HepG2 (cell line): ENCODE measurements at regions of chr2 and their contacts with region 1.

Region 1: GRCh38 chr2:234690569-234691213 is 193.8 kb upstream of the ARL4C start:
- DNase-seq: peak; percentile 42
- ATAC-seq: no peak
- H3K4me3 ChIP-seq: no peak overlapping the region
- H3K27ac ChIP-seq: peak overlapping the region; percentile 79
- H3K4me1 ChIP-seq: peaks cover 98% of the 10 kb centered on the region
- H3K27me3 ChIP-seq: no peaks in the 10 kb centered on the region
- CTCF ChIP-seq: 0 out of 2 replicates have a peak, but pooled peaks have one; percentile 3
- EP300 ChIP-seq: no peak
- POLR2A ChIP-seq: no peak
- RAD21 ChIP-seq: peak; percentile 10; the same call in 1 of the 2 replicates

Region 2: DNA sequence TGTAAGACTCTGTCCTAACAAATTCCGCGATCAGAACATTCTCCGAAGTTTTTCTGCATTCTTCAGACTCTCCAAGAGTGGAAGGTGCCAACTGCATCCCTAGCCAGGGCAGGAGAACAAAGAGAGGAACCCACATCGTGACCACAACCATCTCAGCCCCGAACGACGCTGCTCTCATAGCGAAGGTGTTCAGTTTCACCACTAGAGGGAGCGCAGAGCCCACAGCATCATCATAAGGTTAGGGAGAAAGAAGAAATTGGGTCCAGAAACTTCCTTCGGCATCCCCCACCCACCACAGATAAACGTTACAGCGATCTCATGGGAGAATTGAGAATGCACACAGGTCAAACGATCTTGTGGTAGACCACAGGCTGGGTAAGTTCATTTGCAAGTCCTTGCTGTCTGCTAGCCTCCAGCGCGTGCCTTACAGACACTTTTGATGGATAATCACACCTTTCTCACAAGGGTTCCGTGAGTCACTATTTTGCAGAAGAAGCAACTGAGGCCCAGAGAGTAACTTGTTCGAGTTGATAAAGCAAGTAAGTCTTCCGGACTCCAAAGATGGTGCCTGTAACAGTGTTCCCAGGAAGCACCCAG is 140.1 kb before region 1 on chr2:
- CTCF ChIA-PET with region 1: no interaction called
- POLR2A ChIA-PET with region 1: interaction called, 4 read pairs
- in situ Hi-C with region 1: no loop called
- intact Hi-C with region 1: loop called (anchors 5 kb)
- DNase-seq: peak; percentile 73
- ATAC-seq: peak; percentile 88
- H3K4me3 ChIP-seq: no peak overlapping the region
- H3K27ac ChIP-seq: no peak overlapping the region
- H3K4me1 ChIP-seq: peaks cover 33% of the 10 kb centered on the region
- H3K27me3 ChIP-seq: peaks cover 2 to 33% of the 10 kb centered on the region in 2 experiments; a peak in 4 of 5 replicates
- CTCF ChIP-seq: peak; percentile 99
- EP300 ChIP-seq: no peak
- POLR2A ChIP-seq: no peak
- RAD21 ChIP-seq: peak; percentile 97

Region 3: GRCh38 chr2:234702731-234703225 is 12.1 kb after region 1 on chr2:
- CTCF ChIA-PET with region 1: no interaction called
- POLR2A ChIA-PET with region 1: interaction called, 11 read pairs
- in situ Hi-C with region 1: no loop called
- intact Hi-C with region 1: no loop called
- DNase-seq: peak; percentile 42
- ATAC-seq: peak; percentile 61
- H3K4me3 ChIP-seq: no peak overlapping the region
- H3K27ac ChIP-seq: no peak overlapping the region
- H3K4me1 ChIP-seq: peaks cover 18% of the 10 kb centered on the region
- H3K27me3 ChIP-seq: no peaks in the 10 kb centered on the region
- CTCF ChIP-seq: no peak
- EP300 ChIP-seq: peak in 1 of 2 experiments; percentile 30; a peak in 1 of 4 replicates
- POLR2A ChIP-seq: no peak
- RAD21 ChIP-seq: no peak

Region 4: DNA sequence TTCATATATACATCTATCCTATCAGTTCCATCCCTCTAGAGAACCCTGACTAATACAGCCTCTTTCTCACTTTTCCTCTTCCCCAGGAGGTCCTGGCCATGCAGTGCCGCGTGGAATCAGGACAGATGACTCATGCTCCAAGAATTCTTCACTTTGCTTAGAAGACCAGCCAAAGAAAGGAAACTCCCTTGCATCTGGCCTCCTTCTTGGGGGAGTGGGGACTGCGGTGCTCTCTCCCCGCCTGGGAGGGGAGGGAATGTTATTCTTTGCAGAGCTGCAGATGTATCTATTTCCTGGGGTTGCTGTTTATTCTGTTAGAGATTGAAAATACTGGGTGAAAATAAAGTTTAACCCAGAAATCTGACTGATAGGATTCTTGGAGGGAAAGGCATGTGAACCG is 149.6 kb after region 1 on chr2:
- CTCF ChIA-PET with region 1: no interaction called
- POLR2A ChIA-PET with region 1: interaction called, 6 read pairs
- in situ Hi-C with region 1: no loop called
- intact Hi-C with region 1: loop called (anchors 5 kb)
- DNase-seq: peak; percentile 69
- ATAC-seq: peak; percentile 26
- H3K4me3 ChIP-seq: no peak overlapping the region
- H3K27ac ChIP-seq: no peak overlapping the region
- H3K4me1 ChIP-seq: peaks cover 95% of the 10 kb centered on the region
- H3K27me3 ChIP-seq: no peaks in the 10 kb centered on the region
- CTCF ChIP-seq: no peak
- EP300 ChIP-seq: peak in 1 of 2 experiments; percentile 24; a peak in 1 of 4 replicates
- POLR2A ChIP-seq: no peak
- RAD21 ChIP-seq: no peak

Region 5: GRCh38 chr2:234863043-234863934 is 172.6 kb after region 1 on chr2:
- CTCF ChIA-PET with region 1: no interaction called
- POLR2A ChIA-PET with region 1: interaction called, 5 read pairs
- in situ Hi-C with region 1: no loop called
- intact Hi-C with region 1: loop called (anchors 5 kb)
- DNase-seq: peak; percentile 88
- ATAC-seq: peak; percentile 79
- H3K4me3 ChIP-seq: no peak overlapping the region
- H3K27ac ChIP-seq: peak overlapping the region; percentile 88
- H3K4me1 ChIP-seq: peaks cover 96% of the 10 kb centered on the region
- H3K27me3 ChIP-seq: no peaks in the 10 kb centered on the region
- CTCF ChIP-seq: 0 out of 2 replicates have a peak, but pooled peaks have one; percentile 3
- EP300 ChIP-seq: peak in 1 of 2 experiments; percentile 53; a peak in 1 of 4 replicates
- POLR2A ChIP-seq: 0 out of 4 replicates have a peak, but pooled peaks of 1 of the 2 experiments have one; percentile 23
- RAD21 ChIP-seq: no peak; the same call in 1 of the 2 replicates

Region 6: DNA sequence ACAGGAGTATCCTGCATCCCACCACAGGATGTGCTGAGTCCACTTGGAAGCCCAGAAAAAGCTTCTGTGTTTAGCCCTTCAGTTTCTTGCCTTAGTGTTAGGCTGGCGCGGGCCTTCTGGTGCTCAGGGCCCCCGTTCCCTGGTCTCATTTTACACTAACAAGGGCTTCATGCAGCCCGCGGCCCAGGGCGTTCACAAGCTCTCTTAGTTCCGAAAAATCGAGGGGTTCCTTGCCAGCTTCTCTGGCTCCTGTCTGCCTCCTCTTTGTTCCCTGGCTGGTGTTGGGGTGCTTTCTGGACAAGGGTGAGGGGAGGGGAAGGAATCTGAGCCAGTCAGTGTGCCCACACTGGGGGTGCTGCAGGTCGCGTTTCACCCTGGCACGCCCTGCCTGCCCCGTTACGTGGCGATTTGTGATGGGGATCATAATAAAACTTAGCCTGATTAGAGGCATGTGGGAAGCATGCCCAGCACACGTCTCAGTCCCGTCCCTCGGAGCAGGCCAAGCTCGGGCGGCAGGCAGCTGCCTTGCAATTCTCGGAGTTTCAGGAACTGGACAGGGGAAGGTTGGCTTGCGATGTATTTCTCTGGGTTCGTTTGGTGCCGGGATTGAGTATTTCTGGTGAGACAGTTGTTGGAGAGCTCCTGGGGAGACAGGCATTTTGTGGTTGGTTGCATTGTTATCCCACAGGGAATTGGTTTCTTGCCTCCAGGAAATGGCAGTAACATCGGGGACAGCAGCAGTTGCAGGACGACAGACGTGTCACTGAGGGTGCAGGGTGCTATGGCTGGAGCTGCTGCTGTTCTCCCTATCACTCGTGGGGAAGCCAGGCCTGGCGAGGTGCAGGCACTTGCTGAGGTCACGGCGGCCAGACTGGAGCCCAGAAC is 284.1 kb after region 1 on chr2:
- CTCF ChIA-PET with region 1: no interaction called
- POLR2A ChIA-PET with region 1: interaction called, 11 read pairs
- in situ Hi-C with region 1: no loop called
- intact Hi-C with region 1: loop called (anchors 2 kb)
- DNase-seq: no peak
- ATAC-seq: no peak
- H3K4me3 ChIP-seq: no peak overlapping the region
- H3K27ac ChIP-seq: no peak overlapping the region
- H3K4me1 ChIP-seq: peaks cover 82% of the 10 kb centered on the region
- H3K27me3 ChIP-seq: no peaks in the 10 kb centered on the region
- CTCF ChIP-seq: no peak
- EP300 ChIP-seq: no peak
- POLR2A ChIP-seq: no peak
- RAD21 ChIP-seq: no peak

Region 7: DNA sequence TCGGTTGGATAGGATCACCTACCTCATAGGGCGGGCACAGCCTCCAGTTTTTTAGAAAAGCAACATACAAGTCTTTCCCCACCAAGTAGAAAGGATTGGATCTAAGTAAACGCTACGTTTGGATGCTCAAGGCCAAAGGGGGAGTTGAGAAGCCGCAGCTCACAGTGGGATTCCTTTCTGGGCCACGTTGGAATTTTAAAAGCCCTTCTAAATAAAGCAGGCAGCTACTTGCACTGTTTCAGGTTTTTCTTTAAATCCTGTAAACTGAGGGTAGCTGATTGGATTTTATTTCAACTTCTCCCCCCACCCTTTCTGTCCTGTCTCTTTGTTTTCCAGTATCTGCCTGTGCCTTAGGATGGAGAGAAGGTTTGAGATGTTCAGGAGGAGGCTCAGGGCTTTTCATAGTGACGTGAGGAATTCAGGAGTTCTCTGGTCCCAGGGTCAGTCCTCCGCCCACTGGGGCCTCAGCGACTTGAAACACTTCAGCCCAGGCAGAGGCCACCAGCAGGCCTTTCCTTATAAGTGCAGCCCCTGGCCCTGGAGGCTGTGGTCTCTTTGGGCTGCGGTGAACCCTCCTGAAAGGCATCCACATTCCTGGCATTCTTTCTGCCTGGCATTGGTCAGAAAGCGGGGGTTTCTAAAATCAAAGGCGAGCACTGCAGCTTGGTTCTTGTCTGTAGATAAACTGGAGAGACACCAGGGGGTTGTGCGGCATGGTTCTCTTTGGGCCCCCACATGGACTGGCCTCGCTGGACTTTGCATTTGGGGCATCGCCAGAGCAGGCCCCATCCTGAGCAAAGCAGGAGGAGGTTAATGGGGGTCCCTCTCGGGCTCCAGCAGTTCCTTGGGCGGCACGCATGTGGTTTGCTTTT is 305.6 kb after region 1 on chr2:
- CTCF ChIA-PET with region 1: no interaction called
- POLR2A ChIA-PET with region 1: interaction called, 16 read pairs
- in situ Hi-C with region 1: no loop called
- intact Hi-C with region 1: no loop called
- DNase-seq: peak; percentile 86
- ATAC-seq: peak; percentile 13
- H3K4me3 ChIP-seq: peak overlapping the region in 1 of 3 experiments; percentile 2; a peak in 1 of 6 replicates
- H3K27ac ChIP-seq: peak overlapping the region; percentile 75
- H3K4me1 ChIP-seq: peaks cover 100% of the 10 kb centered on the region
- H3K27me3 ChIP-seq: no peaks in the 10 kb centered on the region
- CTCF ChIP-seq: no peak
- EP300 ChIP-seq: peak in 1 of 2 experiments; percentile 33; a peak in 1 of 4 replicates
- POLR2A ChIP-seq: no peak
- RAD21 ChIP-seq: peak; percentile 19; the same call in 1 of the 2 replicates

Region 8: GRCh38 chr2:235402416-235402815 is 711.7 kb after region 1 on chr2:
- CTCF ChIA-PET with region 1: no interaction called
- POLR2A ChIA-PET with region 1: no interaction called
- in situ Hi-C with region 1: no loop called
- intact Hi-C with region 1: no loop called
- DNase-seq: no peak
- ATAC-seq: no peak
- H3K4me3 ChIP-seq: no peak overlapping the region
- H3K27ac ChIP-seq: no peak overlapping the region
- H3K4me1 ChIP-seq: no peaks in the 10 kb centered on the region
- H3K27me3 ChIP-seq: peaks cover 2 to 21% of the 10 kb centered on the region in 2 experiments; a peak in 3 of 5 replicates
- CTCF ChIP-seq: no peak
- EP300 ChIP-seq: no peak
- POLR2A ChIP-seq: no peak
- RAD21 ChIP-seq: no peak